IMR-90 (cell line): ENCODE measurements at regions of chr6 and their contacts with region 1.

Region 1: GRCh38 chr6:121521892-121522664 is 86.6 kb downstream of the GJA1 start:
- DNase-seq: peak; percentile 96
- ATAC-seq: peak; percentile 74
- H3K4me3 ChIP-seq: peak overlapping the region; percentile 29; the same call in 1 of the 2 replicates
- H3K27ac ChIP-seq: peak overlapping the region; percentile 100
- H3K4me1 ChIP-seq: peaks cover 18% of the 10 kb centered on the region
- H3K27me3 ChIP-seq: no peaks in the 10 kb centered on the region
- CTCF ChIP-seq: no peak
- POLR2A ChIP-seq: no peak
- RAD21 ChIP-seq: peak; percentile 22

Region 2: DNA sequence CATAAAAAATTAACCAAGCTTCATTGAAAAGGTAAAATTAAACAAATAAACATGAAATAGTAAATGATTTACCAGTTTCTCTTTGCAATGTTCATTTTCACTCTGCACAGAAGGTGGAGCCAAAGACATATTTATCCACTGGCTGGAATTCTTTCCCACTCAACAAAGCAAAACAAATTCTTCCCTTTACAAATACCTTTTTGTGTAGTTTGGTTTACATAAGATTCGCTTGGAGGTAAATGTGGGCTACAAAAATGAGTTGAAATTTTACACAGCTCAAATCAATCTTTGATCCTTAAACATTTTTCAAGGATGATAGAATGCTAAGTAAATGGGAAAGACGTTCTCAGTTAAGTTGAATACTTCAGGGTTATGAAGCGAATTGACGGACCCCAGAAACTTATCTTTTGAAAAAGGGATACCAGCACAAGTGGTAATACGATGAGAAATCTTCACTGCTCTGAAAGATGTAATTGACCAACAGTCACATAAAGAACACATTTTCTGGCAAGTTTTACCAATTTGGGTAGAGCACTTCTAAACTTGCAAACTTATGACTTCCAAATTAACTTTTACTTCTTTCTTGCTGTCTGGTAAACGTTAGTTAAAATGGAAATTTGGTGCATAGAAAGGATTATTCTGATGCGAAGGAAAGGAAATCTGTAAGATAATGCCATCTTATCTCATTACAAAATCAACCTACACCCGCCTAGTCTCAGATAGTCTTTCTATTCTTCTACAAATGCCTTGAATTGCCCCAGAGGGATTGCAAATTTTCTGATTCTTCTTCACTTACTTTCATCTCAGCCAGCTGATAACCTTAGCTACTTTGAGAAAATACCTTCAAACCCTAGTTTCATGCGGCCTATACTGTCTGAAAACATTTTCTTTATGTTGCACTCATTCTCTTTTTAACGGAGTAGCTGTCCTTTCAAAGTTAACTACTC is 91.3 kb before region 1 on chr6:
- CTCF ChIA-PET with region 1: no interaction called
- POLR2A ChIA-PET with region 1: no interaction called
- dilution Hi-C with region 1: no loop called
- in situ Hi-C with region 1: no loop called
- intact Hi-C with region 1: no loop called
- DNase-seq: peak; percentile 54
- ATAC-seq: 0 out of 2 replicates have a peak, but pooled peaks have one; percentile 41
- H3K4me3 ChIP-seq: no peak overlapping the region
- H3K27ac ChIP-seq: no peak overlapping the region
- H3K4me1 ChIP-seq: peaks cover 2% of the 10 kb centered on the region; the same call in 1 of the 2 replicates
- H3K27me3 ChIP-seq: no peaks in the 10 kb centered on the region
- CTCF ChIP-seq: peak; percentile 94
- POLR2A ChIP-seq: no peak; the same call in 1 of the 2 replicates
- RAD21 ChIP-seq: peak; percentile 97

Region 3: GRCh38 chr6:121504227-121504626 is 17.9 kb before region 1 on chr6:
- CTCF ChIA-PET with region 1: interaction called, 15 read pairs
- POLR2A ChIA-PET with region 1: no interaction called
- dilution Hi-C with region 1: no loop called
- in situ Hi-C with region 1: no loop called
- intact Hi-C with region 1: loop called (anchors 1 kb)
- DNase-seq: peak; percentile 96
- ATAC-seq: peak; percentile 84
- H3K4me3 ChIP-seq: no peak overlapping the region
- H3K27ac ChIP-seq: peak overlapping the region; percentile 99; the same call in 1 of the 2 replicates
- H3K4me1 ChIP-seq: peaks cover 16% of the 10 kb centered on the region
- H3K27me3 ChIP-seq: no peaks in the 10 kb centered on the region
- CTCF ChIP-seq: no peak
- POLR2A ChIP-seq: no peak
- RAD21 ChIP-seq: no peak

Region 4: GRCh38 chr6:121680058-121680457 is 158.0 kb after region 1 on chr6:
- CTCF ChIA-PET with region 1: no interaction called
- POLR2A ChIA-PET with region 1: no interaction called
- dilution Hi-C with region 1: no loop called
- in situ Hi-C with region 1: no loop called
- intact Hi-C with region 1: no loop called
- DNase-seq: no peak
- ATAC-seq: no peak
- H3K4me3 ChIP-seq: no peak overlapping the region
- H3K27ac ChIP-seq: no peak overlapping the region
- H3K4me1 ChIP-seq: no peaks in the 10 kb centered on the region
- H3K27me3 ChIP-seq: no peaks in the 10 kb centered on the region
- CTCF ChIP-seq: no peak
- POLR2A ChIP-seq: no peak
- RAD21 ChIP-seq: no peak

Region 5: GRCh38 chr6:121694389-121695251 is 172.5 kb after region 1 on chr6:
- CTCF ChIA-PET with region 1: no interaction called
- POLR2A ChIA-PET with region 1: no interaction called
- dilution Hi-C with region 1: no loop called
- in situ Hi-C with region 1: no loop called
- intact Hi-C with region 1: loop called (anchors 5 kb)
- DNase-seq: peak; percentile 45
- ATAC-seq: no peak
- H3K4me3 ChIP-seq: no peak overlapping the region
- H3K27ac ChIP-seq: 0 out of 2 replicates have a peak overlapping the region, but pooled peaks have one; percentile 40
- H3K4me1 ChIP-seq: peaks cover 19% of the 10 kb centered on the region
- H3K27me3 ChIP-seq: no peaks in the 10 kb centered on the region
- CTCF ChIP-seq: no peak
- POLR2A ChIP-seq: no peak
- RAD21 ChIP-seq: no peak

Region 6: DNA sequence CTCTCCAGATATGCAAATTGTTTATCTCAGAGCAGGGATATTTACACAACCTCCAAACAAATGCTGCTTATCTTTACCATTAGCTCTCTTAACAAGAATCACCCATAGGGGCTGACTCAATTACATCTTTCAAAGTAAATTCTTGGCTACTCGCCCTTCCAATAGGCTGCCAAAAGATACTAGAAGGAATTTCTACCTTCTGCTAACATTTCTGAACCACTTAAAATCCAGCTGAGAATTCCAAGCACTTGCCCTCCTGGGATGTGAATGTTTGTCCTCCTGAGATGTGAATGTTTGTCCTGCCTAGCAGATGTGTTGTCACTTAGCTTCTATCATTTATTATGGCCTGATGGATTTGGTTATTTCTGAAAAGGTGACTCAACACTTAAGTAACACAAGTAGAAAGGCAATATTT is 301.4 kb after region 1 on chr6:
- CTCF ChIA-PET with region 1: interaction called, 3 read pairs
- POLR2A ChIA-PET with region 1: no interaction called
- dilution Hi-C with region 1: no loop called
- in situ Hi-C with region 1: no loop called
- intact Hi-C with region 1: loop called (anchors 5 kb)
- DNase-seq: peak; percentile 79
- ATAC-seq: peak; percentile 73
- H3K4me3 ChIP-seq: no peak overlapping the region
- H3K27ac ChIP-seq: no peak overlapping the region
- H3K4me1 ChIP-seq: peaks cover 11% of the 10 kb centered on the region
- H3K27me3 ChIP-seq: no peaks in the 10 kb centered on the region
- CTCF ChIP-seq: no peak
- POLR2A ChIP-seq: no peak
- RAD21 ChIP-seq: no peak